Activated CD4-positive, alpha-beta T cell treated with anti-CD3 and anti-CD28 coated beads for 36 hours (primary cell): ENCODE measurements at regions of chr4 and their contacts with region 1.

Region 1: GRCh38 chr4:15882675-15883086 is 55.9 kb downstream of the FGFBP1 start:
- DNase-seq: peak; percentile 63
- ATAC-seq: peak; percentile 86
- H3K4me3 Mint-ChIP-seq: no peak overlapping the region
- H3K27ac Mint-ChIP-seq: no peak overlapping the region
- H3K4me1 Mint-ChIP-seq: no peaks in the 10 kb centered on the region
- H3K27me3 Mint-ChIP-seq: peaks cover 2% of the 10 kb centered on the region

Region 2: GRCh38 chr4:15729910-15730533 is 152.7 kb before region 1 on chr4:
- CTCF ChIA-PET with region 1: interaction called, 12 read pairs
- POLR2A ChIA-PET with region 1: no interaction called
- intact Hi-C with region 1: loop called (anchors 1 to 5 kb)
- DNase-seq: peak; percentile 19
- ATAC-seq: peak; percentile 65
- H3K4me3 Mint-ChIP-seq: no peak overlapping the region
- H3K27ac Mint-ChIP-seq: no peak overlapping the region
- H3K4me1 Mint-ChIP-seq: peaks cover 7% of the 10 kb centered on the region
- H3K27me3 Mint-ChIP-seq: no peaks in the 10 kb centered on the region

Region 3: GRCh38 chr4:15864651-15865566 is 17.8 kb before region 1 on chr4:
- CTCF ChIA-PET with region 1: interaction called, 10 read pairs
- POLR2A ChIA-PET with region 1: no interaction called
- intact Hi-C with region 1: no loop called
- DNase-seq: no peak
- ATAC-seq: no peak
- H3K4me3 Mint-ChIP-seq: no peak overlapping the region
- H3K27ac Mint-ChIP-seq: no peak overlapping the region
- H3K4me1 Mint-ChIP-seq: peaks cover 7% of the 10 kb centered on the region
- H3K27me3 Mint-ChIP-seq: no peaks in the 10 kb centered on the region

Region 4: DNA sequence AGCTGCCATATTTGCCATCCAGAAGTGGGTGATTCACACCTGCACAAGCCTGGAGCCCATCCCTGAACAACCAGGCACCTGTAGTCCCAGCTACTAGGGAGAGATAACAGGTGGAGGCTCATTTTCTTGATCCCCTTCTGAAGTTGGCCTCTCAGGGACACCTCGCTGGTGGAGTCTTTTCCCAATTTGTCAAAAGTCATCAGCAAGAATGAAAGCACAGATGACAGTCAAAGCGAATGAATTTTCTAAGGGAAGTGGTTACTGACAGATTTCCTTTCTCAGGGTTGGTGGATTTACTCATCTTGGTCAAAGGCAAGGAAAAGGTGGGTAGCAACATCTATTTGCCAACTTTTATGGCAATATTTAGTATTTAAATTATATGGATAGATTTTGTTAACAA is 19.3 kb after region 1 on chr4:
- CTCF ChIA-PET with region 1: interaction called, 21 read pairs
- POLR2A ChIA-PET with region 1: no interaction called
- intact Hi-C with region 1: no loop called
- DNase-seq: peak; percentile 30
- ATAC-seq: peak; percentile 77
- H3K4me3 Mint-ChIP-seq: no peak overlapping the region
- H3K27ac Mint-ChIP-seq: no peak overlapping the region
- H3K4me1 Mint-ChIP-seq: peaks cover 15% of the 10 kb centered on the region
- H3K27me3 Mint-ChIP-seq: peaks cover 38% of the 10 kb centered on the region

Region 5: DNA sequence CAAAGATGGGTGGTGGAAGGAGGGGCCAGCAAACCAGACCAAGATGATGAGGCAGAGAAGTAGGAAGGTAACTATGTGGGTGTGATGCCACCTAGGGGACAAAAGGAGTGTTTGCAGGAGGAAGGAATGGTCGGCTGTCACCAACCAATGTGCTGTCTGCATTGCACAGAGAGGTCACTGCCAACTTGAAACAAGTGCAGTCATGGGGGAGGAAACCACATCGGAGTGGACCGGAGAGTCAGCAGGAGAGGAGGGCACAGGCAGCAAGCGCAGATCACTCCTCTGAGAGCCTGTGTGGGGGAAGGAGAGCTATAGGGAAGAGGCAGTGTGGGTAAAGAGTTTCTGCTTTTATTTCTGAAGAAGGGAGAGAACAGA is 118.8 kb after region 1 on chr4:
- CTCF ChIA-PET with region 1: interaction called, 40 read pairs
- POLR2A ChIA-PET with region 1: no interaction called
- intact Hi-C with region 1: loop called (anchors 1 kb)
- DNase-seq: peak; percentile 67
- ATAC-seq: peak; percentile 94
- H3K4me3 Mint-ChIP-seq: no peak overlapping the region
- H3K27ac Mint-ChIP-seq: no peak overlapping the region
- H3K4me1 Mint-ChIP-seq: no peaks in the 10 kb centered on the region
- H3K27me3 Mint-ChIP-seq: no peaks in the 10 kb centered on the region